Right ventricle myocardium superior (tissue), 1 donor: ENCODE measurements at regions of chr1 and their contacts with region 1.

Region 1: GRCh38 chr1:214584805-214585766 is 17.9 kb upstream of the CENPF start:
- DNase-seq: no peak
- ATAC-seq: peak; percentile 82

Region 2: GRCh38 chr1:214213136-214213535 is 371.9 kb before region 1 on chr1:
- intact Hi-C with region 1: loop called (anchors 10 kb)
- DNase-seq: no peak
- ATAC-seq: no peak

Region 3: DNA sequence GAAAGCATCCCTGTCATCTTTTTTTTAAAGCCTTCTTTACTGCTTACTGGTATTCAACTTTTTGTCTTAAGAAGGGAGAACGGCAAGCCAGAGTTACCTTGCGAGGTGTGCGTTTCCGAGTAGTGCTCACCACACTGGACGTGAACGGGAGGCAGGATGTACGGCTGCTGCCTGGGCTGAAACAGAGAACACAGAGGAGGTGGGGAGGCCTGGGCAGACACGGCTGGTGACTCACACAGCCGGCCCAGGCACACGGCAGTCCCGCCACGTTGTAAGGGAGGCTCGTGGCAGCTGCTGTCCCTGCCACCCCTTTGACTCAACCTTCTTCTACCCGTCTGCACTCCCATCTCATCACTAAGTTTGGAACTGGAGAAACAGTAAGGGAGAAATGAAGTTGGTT is 198.3 kb before region 1 on chr1:
- intact Hi-C with region 1: loop called (anchors 5 kb)
- DNase-seq: no peak
- ATAC-seq: no peak